Naive thymus-derived CD4-positive, alpha-beta T cell (primary cell): ENCODE measurements at regions of chr2 and their contacts with region 1.

Region 1: DNA sequence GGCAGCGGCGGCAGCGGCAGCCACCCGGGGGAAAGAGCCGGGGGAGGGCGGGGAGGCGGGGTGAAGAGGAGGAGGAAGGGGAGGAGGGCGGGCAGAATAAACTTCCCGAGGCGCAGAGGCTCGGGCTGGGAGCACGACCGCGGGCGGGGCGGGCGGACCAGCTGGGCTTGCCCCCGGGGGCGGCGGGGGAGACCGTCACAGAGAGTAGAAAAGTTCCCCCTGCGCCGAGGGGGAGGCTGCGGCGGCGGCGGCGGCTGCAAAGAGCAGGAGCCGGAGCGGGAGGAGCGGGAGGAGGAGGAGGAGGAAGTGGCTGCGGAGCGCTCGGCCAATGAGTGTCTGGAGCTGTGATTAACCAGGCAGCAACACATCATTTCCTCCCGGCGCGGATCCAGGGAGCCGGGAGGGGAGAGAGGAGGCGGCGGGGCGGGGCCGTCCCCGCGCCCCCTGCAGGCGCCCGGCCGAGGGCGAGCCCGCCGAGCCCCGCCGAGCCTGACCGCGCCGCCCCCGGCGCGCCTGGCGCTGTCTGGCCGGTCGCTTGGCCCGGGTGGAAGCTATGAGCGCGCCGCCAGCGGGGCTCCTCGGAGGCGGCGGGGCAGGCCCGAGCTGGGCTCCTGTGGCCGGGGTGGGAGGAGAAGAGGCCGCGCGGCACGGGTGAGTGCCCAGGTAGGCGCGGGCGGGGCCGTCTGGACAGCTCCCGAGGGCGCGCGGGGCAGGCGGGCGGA is at the start of gene ACVR1:
- DNase-seq: peak; percentile 68 to 85 (median 75)
- ATAC-seq: peak; percentile 86
- H3K4me3 ChIP-seq: peak within 1 kb of the TSS; percentile 60
- H3K4me3 Mint-ChIP-seq: peak within 1 kb of the TSS; percentile 90 to 98 (median 96)
- H3K27ac ChIP-seq: peak within 1 kb of the TSS; percentile 77
- H3K27ac Mint-ChIP-seq: peak within 1 kb of the TSS; percentile 83 to 96 (median 90)
- H3K4me1 ChIP-seq: peaks cover 12 to 19% of the 10 kb centered on the region in 2 donors
- H3K4me1 Mint-ChIP-seq: peaks cover 24 to 63% (median 53%) of the 10 kb centered on the region in 7 donors
- H3K27me3 ChIP-seq: no peaks in the 10 kb centered on the region
- H3K27me3 Mint-ChIP-seq: no peaks in the 10 kb centered on the region
- total RNA-seq, gene ACVR1: 13.3 to 42.0 (median 20.6) TPM

Region 2: DNA sequence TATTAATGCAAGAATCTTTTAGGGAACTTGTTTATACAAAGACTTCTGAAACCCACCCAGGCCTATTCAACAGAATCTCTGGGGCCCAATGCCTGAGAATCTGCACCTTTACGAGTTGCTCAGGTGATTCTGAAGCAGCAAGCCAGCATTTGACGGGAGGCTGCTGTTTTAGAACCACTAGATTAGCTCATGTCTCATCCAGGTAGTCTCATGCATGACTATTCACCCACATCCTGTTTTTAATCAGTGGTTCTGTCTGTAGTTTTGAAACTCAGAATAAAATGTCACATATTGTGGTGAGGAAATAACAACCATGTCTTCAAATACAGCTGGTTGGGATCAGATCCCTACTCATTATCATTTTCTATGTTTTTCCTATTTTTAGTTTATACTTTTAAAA is 471.9 kb before region 1 on chr2:
- CTCF ChIA-PET with region 1: no interaction called
- POLR2A ChIA-PET with region 1: no interaction called
- intact Hi-C with region 1: loop called in 1 of 2 experiments (anchors 5 kb)
- DNase-seq: peak in 8 of 9 donors; percentile 44 to 92 (median 88)
- ATAC-seq: peak; percentile 98
- H3K4me3 ChIP-seq: peak overlapping the region; percentile 7
- H3K4me3 Mint-ChIP-seq: peak overlapping the region; percentile 8 to 83 (median 74)
- H3K27ac ChIP-seq: peak overlapping the region; percentile 75
- H3K27ac Mint-ChIP-seq: peak overlapping the region; percentile 91 to 100 (median 99)
- H3K4me1 ChIP-seq: peaks cover 33 to 55% of the 10 kb centered on the region in 2 donors
- H3K4me1 Mint-ChIP-seq: peaks cover 31 to 82% (median 77%) of the 10 kb centered on the region in 7 donors
- H3K27me3 ChIP-seq: no peaks in the 10 kb centered on the region
- H3K27me3 Mint-ChIP-seq: no peaks in the 10 kb centered on the region

Region 3: GRCh38 chr2:157761520-157761919 is 114.7 kb before region 1 on chr2:
- CTCF ChIA-PET with region 1: no interaction called
- POLR2A ChIA-PET with region 1: no interaction called
- intact Hi-C with region 1: no loop called
- DNase-seq: no peak
- ATAC-seq: no peak
- H3K4me3 ChIP-seq: no peak overlapping the region
- H3K4me3 Mint-ChIP-seq: no peak overlapping the region
- H3K27ac ChIP-seq: no peak overlapping the region
- H3K27ac Mint-ChIP-seq: no peak overlapping the region
- H3K4me1 ChIP-seq: no peaks in the 10 kb centered on the region
- H3K4me1 Mint-ChIP-seq: peaks cover 0 to 2% (median 0%) of the 10 kb centered on the region in 7 donors
- H3K27me3 ChIP-seq: no peaks in the 10 kb centered on the region
- H3K27me3 Mint-ChIP-seq: no peaks in the 10 kb centered on the region

Region 4: GRCh38 chr2:157784169-157784822 is 91.9 kb before region 1 on chr2:
- CTCF ChIA-PET with region 1: no interaction called
- POLR2A ChIA-PET with region 1: no interaction called
- intact Hi-C with region 1: loop called (anchors 2 kb)
- DNase-seq: peak in 6 of 9 donors; percentile 3 to 29 (median 14)
- ATAC-seq: peak; percentile 55
- H3K4me3 ChIP-seq: no peak overlapping the region
- H3K4me3 Mint-ChIP-seq: peak overlapping the region in 9 of 10 donors; percentile 22 to 59 (median 38)
- H3K27ac ChIP-seq: no peak overlapping the region
- H3K27ac Mint-ChIP-seq: peak overlapping the region; percentile 25 to 90 (median 73)
- H3K4me1 ChIP-seq: peaks cover 0 to 12% of the 10 kb centered on the region in 2 donors
- H3K4me1 Mint-ChIP-seq: peaks cover 13 to 51% (median 37%) of the 10 kb centered on the region in 7 donors
- H3K27me3 ChIP-seq: no peaks in the 10 kb centered on the region
- H3K27me3 Mint-ChIP-seq: no peaks in the 10 kb centered on the region

Region 5: GRCh38 chr2:157890969-157891639 is 14.9 kb after region 1 on chr2:
- CTCF ChIA-PET with region 1: interaction called, 10 read pairs
- POLR2A ChIA-PET with region 1: interaction called, 50 read pairs
- intact Hi-C with region 1: no loop called
- DNase-seq: no peak
- ATAC-seq: no peak
- H3K4me3 ChIP-seq: peak overlapping the region; percentile 18
- H3K4me3 Mint-ChIP-seq: peak overlapping the region; percentile 1 to 91 (median 79)
- H3K27ac ChIP-seq: no peak overlapping the region
- H3K27ac Mint-ChIP-seq: peak overlapping the region; percentile 69 to 98 (median 88)
- H3K4me1 ChIP-seq: peaks cover 14 to 29% of the 10 kb centered on the region in 2 donors
- H3K4me1 Mint-ChIP-seq: peaks cover 24 to 65% (median 56%) of the 10 kb centered on the region in 7 donors
- H3K27me3 ChIP-seq: no peaks in the 10 kb centered on the region
- H3K27me3 Mint-ChIP-seq: no peaks in the 10 kb centered on the region

Region 6: GRCh38 chr2:158060862-158061435 is 184.7 kb after region 1 on chr2:
- CTCF ChIA-PET with region 1: no interaction called
- POLR2A ChIA-PET with region 1: no interaction called
- intact Hi-C with region 1: no loop called
- DNase-seq: no peak
- ATAC-seq: no peak
- H3K4me3 ChIP-seq: no peak overlapping the region
- H3K4me3 Mint-ChIP-seq: no peak overlapping the region
- H3K27ac ChIP-seq: no peak overlapping the region
- H3K27ac Mint-ChIP-seq: no peak overlapping the region
- H3K4me1 ChIP-seq: no peaks in the 10 kb centered on the region
- H3K4me1 Mint-ChIP-seq: peaks cover 0 to 2% (median 0%) of the 10 kb centered on the region in 7 donors
- H3K27me3 ChIP-seq: no peaks in the 10 kb centered on the region
- H3K27me3 Mint-ChIP-seq: peaks cover 0 to 4% (median 2%) of the 10 kb centered on the region in 5 donors

Region 7: GRCh38 chr2:158753641-158754611 is 877.7 kb after region 1 on chr2:
- CTCF ChIA-PET with region 1: no interaction called
- POLR2A ChIA-PET with region 1: no interaction called
- intact Hi-C with region 1: no loop called
- DNase-seq: peak in 5 of 9 donors; percentile 21 to 51 (median 42)
- ATAC-seq: peak; percentile 75
- H3K4me3 ChIP-seq: no peak overlapping the region
- H3K4me3 Mint-ChIP-seq: no peak overlapping the region
- H3K27ac ChIP-seq: no peak overlapping the region
- H3K27ac Mint-ChIP-seq: no peak overlapping the region
- H3K4me1 ChIP-seq: no peaks in the 10 kb centered on the region
- H3K4me1 Mint-ChIP-seq: no peaks in the 10 kb centered on the region
- H3K27me3 ChIP-seq: no peaks in the 10 kb centered on the region
- H3K27me3 Mint-ChIP-seq: peaks cover 0 to 29% (median 13%) of the 10 kb centered on the region in 5 donors